MCF 10A (cell line): ENCODE measurements at regions of chr22 and their contacts with region 1.

Region 1: GRCh38 chr22:44191036-44191454 is 10.3 kb downstream of the PARVG start:
- DNase-seq: peak; percentile 28
- H3K4me3 Mint-ChIP-seq: no peak overlapping the region
- H3K27ac Mint-ChIP-seq: no peak overlapping the region
- H3K4me1 Mint-ChIP-seq: peaks cover 24% of the 10 kb centered on the region
- H3K27me3 Mint-ChIP-seq: peaks cover 45% of the 10 kb centered on the region
- CTCF ChIP-seq: no peak

Region 2: GRCh38 chr22:44179989-44180705 is 10.9 kb before region 1 on chr22:
- CTCF ChIA-PET with region 1: interaction called, 12 read pairs
- POLR2A ChIA-PET with region 1: interaction called, 3 read pairs
- intact Hi-C with region 1: no loop called
- DNase-seq: no peak
- H3K4me3 Mint-ChIP-seq: no peak overlapping the region
- H3K27ac Mint-ChIP-seq: no peak overlapping the region
- H3K4me1 Mint-ChIP-seq: peaks cover 13% of the 10 kb centered on the region
- H3K27me3 Mint-ChIP-seq: peaks cover 65% of the 10 kb centered on the region
- CTCF ChIP-seq: no peak

Region 3: DNA sequence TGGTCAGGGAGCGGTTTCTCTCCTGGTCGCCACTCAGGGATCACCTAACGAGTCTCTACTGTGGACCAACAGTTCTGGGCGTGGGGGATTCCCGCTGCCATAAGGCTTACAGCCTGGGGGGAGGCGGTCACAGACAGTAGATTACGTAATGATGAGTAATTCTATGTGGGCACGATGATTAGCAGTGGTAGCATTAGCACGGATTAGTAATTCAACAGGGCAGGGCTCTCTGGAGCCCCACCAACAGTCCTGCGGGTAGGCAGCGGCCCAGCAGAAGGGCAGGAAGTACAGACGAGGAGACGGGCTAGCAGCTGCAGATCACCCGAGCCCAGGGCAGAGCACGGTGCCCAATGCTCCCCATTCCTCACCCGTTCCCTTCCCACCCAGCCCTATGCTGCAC is 118.1 kb after region 1 on chr22:
- CTCF ChIA-PET with region 1: no interaction called
- POLR2A ChIA-PET with region 1: no interaction called
- intact Hi-C with region 1: loop called (anchors 1 kb)
- DNase-seq: peak; percentile 93
- H3K4me3 Mint-ChIP-seq: peak overlapping the region; percentile 24
- H3K27ac Mint-ChIP-seq: no peak overlapping the region
- H3K4me1 Mint-ChIP-seq: peaks cover 12% of the 10 kb centered on the region
- H3K27me3 Mint-ChIP-seq: no peaks in the 10 kb centered on the region
- CTCF ChIP-seq: no peak